RWPE1 (cell line): ENCODE measurements at regions of chr20 and their contacts with region 1.

Region 1: GRCh38 chr20:47479506-47479905 is 22.2 kb upstream of the NCOA3 start:
- DNase-seq: no peak
- H3K27ac ChIP-seq: peak overlapping the region; percentile 57
- CTCF ChIP-seq: no peak

Region 2: DNA sequence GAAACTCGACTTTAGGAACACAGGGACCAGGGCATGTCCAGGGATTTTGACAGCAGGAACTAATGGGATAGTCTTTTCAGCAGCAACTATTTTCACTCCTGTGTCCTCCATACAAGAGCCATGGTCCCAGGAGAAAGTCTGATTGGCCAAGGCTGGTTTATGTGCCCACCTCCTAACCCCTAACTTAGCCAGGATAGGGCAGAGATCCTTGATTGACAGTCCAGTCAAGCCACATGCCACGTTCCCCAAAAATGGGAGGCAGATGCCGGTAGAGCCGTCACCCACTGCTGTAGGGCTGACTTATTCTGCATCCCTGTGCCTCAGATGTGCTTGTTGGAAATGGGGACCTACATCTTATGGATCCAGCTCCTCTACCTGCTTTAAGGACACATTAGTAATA is 747.7 kb before region 1 on chr20:
- CTCF ChIA-PET with region 1: no interaction called
- POLR2A ChIA-PET with region 1: interaction called, 19 read pairs
- DNase-seq: peak; percentile 44
- H3K27ac ChIP-seq: no peak overlapping the region
- CTCF ChIP-seq: no peak

Region 3: DNA sequence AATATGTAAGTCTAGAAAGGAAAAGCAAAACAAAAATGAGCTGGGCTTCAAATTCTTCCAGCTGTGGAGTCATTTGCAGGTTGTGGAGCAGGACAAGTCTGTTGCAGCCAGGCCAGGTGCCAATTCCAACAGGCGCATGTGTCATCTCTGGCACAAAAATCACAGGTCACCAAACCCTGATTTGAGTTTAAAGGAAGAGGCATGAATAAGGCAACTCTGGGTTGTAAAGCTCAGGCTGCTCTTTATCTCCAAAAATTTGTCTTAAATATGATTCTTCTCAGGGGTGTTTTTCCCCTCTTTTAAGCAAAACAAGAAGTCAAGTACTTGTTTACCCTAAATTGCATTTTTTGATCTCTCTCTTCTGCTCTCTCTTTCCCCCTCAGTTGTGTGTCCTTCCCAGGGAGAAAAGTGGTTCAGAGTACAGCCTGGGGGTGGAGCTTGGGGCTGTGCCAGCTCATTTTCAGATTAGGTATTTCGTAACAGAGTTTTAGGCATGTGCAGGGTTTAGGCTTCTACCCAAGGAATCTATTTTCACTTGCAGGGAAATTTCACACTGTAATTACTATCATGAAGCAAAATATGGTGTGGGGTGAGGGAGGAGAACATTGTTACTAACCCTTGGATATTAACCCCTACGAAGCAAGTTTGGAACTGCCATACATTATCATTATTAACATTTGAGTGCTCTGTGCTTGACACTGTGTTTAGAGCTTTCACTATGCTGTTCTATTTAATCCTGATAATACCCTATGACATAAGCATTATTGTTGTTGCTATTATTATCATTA is 13.9 kb after region 1 on chr20:
- CTCF ChIA-PET with region 1: interaction called, 15 read pairs
- POLR2A ChIA-PET with region 1: no interaction called
- DNase-seq: peak; percentile 89
- H3K27ac ChIP-seq: peak overlapping the region; percentile 96
- CTCF ChIP-seq: no peak